Esophagus muscularis mucosa (tissue), 4 donors: ENCODE measurements at regions of chr4 and their contacts with region 1.

Region 1: DNA sequence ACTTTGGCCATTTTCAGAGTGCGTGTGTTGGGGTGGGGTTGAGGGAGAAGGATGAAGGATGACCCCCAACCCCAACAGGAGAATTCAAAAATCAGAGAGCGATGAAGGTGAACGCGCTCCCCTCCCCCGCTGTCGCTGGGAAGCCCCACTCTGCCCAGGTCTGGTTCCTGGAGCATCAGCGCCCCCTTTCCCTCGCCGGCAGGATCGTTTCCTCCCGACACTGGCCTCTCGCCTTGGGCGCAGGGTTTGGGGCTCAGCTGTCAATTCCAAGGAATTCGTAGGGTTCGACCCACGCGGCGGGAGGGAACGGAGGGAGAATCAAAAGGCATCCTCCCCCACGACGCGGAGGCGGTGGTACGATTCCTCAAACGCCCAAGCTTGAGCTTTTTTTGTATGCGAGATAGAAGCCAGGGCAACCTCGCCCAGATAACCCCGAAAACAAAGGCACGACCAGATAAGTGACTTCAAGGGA is 1.0 kb upstream of the PDGFRA start:
- DNase-seq: peak; percentile 95
- H3K4me3 ChIP-seq: peak overlapping the region; percentile 47 to 71 (median 58)
- H3K27ac ChIP-seq: peak overlapping the region; percentile 51 to 71 (median 60)
- H3K4me1 ChIP-seq: peaks cover 59 to 78% (median 67%) of the 10 kb centered on the region in 4 donors
- H3K27me3 ChIP-seq: peaks cover 16 to 100% (median 80%) of the 10 kb centered on the region in 4 donors
- CTCF ChIP-seq: peak; percentile 41 to 61 (median 52)
- EP300 ChIP-seq: no peak
- POLR2A ChIP-seq: no peak

Region 2: DNA sequence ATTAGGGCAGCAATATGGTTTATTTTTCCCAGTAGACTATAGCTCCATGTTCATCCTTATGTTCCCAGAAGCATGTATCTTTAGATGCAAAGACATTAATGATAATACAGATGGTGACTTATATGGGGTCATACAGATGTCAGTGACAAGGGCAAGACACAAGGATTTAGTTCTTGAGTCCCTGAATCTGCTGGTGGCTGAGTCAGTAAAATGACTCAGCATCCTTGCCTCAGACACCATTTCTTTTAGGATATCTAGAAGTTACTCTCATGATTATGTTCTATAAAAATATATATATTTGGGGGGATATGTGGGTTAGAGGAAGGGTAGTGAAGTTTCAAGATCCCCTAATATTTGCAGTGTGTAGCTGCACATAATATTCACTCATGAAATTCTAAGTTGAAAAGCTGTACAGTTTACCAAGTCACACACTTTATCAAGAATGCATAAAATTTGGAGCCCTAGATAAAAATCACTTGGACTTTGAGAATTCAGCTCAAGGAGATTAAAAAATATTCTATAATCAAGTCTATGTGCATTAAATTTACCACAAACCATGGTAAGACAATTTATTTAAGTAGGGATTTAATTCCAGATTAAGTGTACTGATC is 738.7 kb before region 1 on chr4:
- intact Hi-C with region 1: loop called (anchors 10 kb)
- DNase-seq: no peak
- H3K4me3 ChIP-seq: no peak overlapping the region
- H3K27ac ChIP-seq: no peak overlapping the region
- H3K4me1 ChIP-seq: peaks cover 0 to 5% (median 3%) of the 10 kb centered on the region in 4 donors
- H3K27me3 ChIP-seq: no peaks in the 10 kb centered on the region
- CTCF ChIP-seq: no peak
- EP300 ChIP-seq: no peak
- POLR2A ChIP-seq: no peak

Region 3: DNA sequence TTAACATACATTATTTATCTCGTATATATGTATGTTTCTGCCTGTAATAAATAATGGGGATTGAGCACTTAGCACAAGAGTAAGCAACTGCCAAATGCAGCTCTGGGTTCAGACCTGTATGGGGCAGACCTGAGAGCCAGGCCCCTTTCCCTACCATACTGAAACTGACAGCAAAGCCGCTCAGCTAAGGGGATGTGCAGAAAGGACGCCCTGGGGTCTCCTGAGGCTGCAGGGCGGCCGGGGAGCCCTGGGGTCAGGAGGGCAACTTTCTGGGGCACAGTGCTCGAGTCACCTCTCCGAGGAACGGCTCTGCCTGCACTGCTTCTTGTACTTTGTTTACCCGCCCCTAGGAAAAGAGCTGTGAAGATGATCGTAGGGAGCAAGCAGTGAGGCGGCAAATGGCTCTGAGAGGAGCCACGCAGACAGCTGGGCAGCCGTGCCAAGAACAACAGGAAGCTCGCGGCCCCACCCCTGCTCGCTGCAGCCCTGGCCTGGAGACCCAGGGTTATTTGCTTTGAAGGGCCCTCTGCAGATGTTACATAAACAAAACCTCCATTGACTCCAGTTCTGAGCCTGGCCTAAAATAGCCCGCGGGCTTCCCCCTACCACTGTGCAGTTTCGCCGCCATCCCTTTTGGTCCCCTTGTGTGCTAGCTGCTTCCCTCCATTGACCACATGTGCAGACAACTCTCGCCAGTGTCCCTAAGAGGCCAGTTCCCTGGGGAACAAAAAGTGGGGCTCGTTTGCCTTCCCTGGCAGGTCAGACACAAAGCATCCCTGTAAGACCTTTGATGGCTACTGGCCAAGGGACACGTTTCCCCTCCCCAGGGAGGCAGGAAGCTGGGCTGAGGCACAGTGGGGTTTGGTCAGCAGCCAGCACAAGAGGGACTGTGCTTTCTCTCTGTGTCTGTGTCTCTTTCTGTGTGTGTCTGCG is 525.5 kb before region 1 on chr4:
- intact Hi-C with region 1: loop called (anchors 10 kb)
- DNase-seq: peak; percentile 95
- H3K4me3 ChIP-seq: peak overlapping the region; percentile 34 to 42 (median 38)
- H3K27ac ChIP-seq: peak overlapping the region; percentile 49 to 59 (median 54)
- H3K4me1 ChIP-seq: peaks cover 14 to 21% (median 16%) of the 10 kb centered on the region in 4 donors
- H3K27me3 ChIP-seq: no peaks in the 10 kb centered on the region
- CTCF ChIP-seq: no peak
- EP300 ChIP-seq: no peak
- POLR2A ChIP-seq: no peak

Region 4: GRCh38 chr4:54139332-54139731 is 88.8 kb before region 1 on chr4:
- intact Hi-C with region 1: no loop called
- DNase-seq: no peak
- H3K4me3 ChIP-seq: no peak overlapping the region
- H3K27ac ChIP-seq: no peak overlapping the region
- H3K4me1 ChIP-seq: no peaks in the 10 kb centered on the region
- H3K27me3 ChIP-seq: peaks cover 0 to 3% (median 0%) of the 10 kb centered on the region in 4 donors
- CTCF ChIP-seq: no peak
- EP300 ChIP-seq: no peak
- POLR2A ChIP-seq: no peak